AG04450 (cell line): ENCODE measurements at regions of chr5 and their contacts with region 1.

Region 1: DNA sequence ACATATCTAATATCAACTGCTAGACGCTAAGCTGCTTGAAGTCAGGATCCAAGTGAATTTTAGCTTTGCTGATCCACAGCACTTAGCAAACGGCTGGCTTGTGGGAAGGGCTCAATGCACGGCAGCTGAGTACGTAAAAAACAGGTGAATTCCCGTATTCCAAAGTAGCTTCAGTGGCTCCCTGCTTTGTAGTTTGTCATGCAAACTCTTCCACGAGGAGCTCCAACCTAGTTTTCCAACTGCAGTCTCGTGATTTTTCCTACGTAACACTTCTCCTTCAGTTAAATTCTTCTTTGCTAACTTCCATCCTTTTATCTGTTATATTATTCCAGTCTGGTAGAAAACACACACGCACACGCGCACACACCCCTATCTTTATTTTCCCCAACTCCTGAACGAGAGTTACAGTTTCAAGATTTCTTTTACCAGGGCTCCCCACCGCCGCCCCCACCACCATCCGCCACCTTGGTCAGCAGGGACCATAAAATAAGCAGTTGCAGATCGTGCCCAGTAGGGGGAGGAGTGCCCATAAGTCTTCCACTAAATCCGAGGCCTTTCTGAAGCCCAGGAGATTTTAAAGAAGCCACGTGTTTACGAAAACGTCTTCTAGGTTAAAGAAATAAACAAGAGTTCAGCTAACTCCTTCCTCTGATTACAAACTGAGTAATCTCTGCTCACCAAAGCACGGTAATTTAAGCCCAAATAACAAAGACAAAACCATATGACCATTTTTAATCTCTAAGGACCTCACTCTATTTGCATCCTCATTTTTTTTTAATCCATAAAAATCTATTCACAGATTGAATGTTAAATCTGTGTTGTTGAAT is 34.8 kb upstream of the TRIO start:
- DNase-seq: peak; percentile 73
- H3K4me3 ChIP-seq: no peak overlapping the region
- H3K27ac ChIP-seq: peak overlapping the region; percentile 43
- H3K27me3 ChIP-seq: no peaks in the 10 kb centered on the region
- CTCF ChIP-seq: peak; percentile 73

Region 2: DNA sequence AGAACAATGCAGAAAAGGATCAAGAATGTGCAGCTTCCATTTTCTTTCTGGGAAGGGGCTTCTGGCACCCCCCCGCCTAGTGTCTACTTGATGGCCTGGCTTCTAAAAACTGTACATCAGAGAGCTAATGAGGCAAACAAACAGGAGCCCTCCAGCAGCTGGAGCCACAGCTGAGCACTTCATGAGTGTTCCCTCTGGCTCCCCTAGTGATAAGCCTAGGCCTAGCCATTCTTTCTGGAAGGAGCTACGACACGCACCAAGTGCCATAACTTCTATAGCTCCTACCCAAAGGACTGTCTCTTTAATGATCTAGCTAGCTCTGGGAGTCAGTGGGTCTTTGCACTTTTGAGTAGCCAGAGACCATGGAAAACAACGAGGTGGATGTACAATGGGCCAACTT is 230.0 kb before region 1 on chr5:
- CTCF ChIA-PET with region 1: no interaction called
- POLR2A ChIA-PET with region 1: no interaction called
- DNase-seq: no peak
- H3K4me3 ChIP-seq: no peak overlapping the region
- H3K27ac ChIP-seq: no peak overlapping the region
- H3K27me3 ChIP-seq: no peaks in the 10 kb centered on the region
- CTCF ChIP-seq: 0 out of 2 replicates have a peak, but pooled peaks have one; percentile 5

Region 3: GRCh38 chr5:14129123-14129522 is 20.7 kb after region 1 on chr5:
- CTCF ChIA-PET with region 1: interaction called, 10 read pairs
- POLR2A ChIA-PET with region 1: no interaction called
- DNase-seq: no peak
- H3K4me3 ChIP-seq: no peak overlapping the region
- H3K27ac ChIP-seq: no peak overlapping the region
- H3K27me3 ChIP-seq: no peaks in the 10 kb centered on the region
- CTCF ChIP-seq: no peak

Region 4: GRCh38 chr5:14174230-14174637 is 65.9 kb after region 1 on chr5:
- CTCF ChIA-PET with region 1: no interaction called
- POLR2A ChIA-PET with region 1: no interaction called
- DNase-seq: no peak
- H3K4me3 ChIP-seq: no peak overlapping the region
- H3K27ac ChIP-seq: peak overlapping the region; percentile 66
- H3K27me3 ChIP-seq: no peaks in the 10 kb centered on the region
- CTCF ChIP-seq: no peak